ENCODE measurements at regions of chr11 and their contacts with region 1.

Region 1: DNA sequence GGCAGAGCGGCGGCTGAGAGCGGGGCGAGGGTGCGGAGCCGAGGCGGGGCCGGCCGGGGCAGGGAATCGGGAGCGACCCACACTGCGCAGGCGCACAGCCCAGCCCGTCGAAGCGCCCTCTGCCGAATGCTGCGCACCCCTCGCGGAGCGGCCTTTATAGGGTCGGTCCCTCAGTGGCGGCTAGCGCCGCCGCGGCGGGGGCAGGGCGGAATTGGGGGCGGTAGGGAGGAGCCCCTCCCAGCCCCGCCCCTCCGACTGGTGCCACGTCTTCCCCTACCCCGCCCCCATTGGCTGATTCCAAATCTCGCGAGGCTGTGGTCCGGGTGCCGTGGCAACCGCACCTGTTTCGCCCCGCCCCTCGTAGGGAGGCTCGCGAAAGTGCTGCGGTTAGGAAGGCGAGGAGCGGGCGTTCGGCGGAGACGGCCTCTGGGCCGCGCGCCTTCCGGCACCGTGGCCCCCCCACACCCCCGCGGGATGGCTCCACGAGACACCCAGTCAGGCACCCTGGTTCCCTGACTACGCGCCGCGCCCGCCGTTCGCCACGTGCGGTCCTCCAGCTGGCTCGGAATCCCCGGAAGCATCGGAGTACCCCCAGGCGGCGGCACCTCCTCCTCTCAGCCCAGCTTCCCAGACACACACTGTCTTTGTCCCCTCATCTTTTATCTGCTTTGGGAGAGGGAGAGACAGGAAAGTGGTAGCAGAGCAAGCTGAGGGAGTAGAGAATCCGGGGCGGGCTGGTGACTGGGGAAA is at the start of gene EHD1:
- DNase-seq: peak; percentile 99 to 100 (median 100)
- ATAC-seq: peak; percentile 81
- H3K4me3 ChIP-seq: peak within 1 kb of the TSS; percentile 100
- H3K4me3 Mint-ChIP-seq: peak within 1 kb of the TSS; percentile 98
- H3K27ac ChIP-seq: peak within 1 kb of the TSS; percentile 95 to 97
- H3K27ac Mint-ChIP-seq: peak within 1 kb of the TSS; percentile 92
- H3K4me1 ChIP-seq: peaks cover 72% of the 10 kb centered on the region
- H3K4me1 Mint-ChIP-seq: peaks cover 62% of the 10 kb centered on the region
- H3K27me3 ChIP-seq: no peaks in the 10 kb centered on the region
- H3K27me3 Mint-ChIP-seq: no peaks in the 10 kb centered on the region
- CTCF ChIP-seq: peak; percentile 58
- total RNA-seq, gene EHD1: 132 to 139 TPM

Region 2: DNA sequence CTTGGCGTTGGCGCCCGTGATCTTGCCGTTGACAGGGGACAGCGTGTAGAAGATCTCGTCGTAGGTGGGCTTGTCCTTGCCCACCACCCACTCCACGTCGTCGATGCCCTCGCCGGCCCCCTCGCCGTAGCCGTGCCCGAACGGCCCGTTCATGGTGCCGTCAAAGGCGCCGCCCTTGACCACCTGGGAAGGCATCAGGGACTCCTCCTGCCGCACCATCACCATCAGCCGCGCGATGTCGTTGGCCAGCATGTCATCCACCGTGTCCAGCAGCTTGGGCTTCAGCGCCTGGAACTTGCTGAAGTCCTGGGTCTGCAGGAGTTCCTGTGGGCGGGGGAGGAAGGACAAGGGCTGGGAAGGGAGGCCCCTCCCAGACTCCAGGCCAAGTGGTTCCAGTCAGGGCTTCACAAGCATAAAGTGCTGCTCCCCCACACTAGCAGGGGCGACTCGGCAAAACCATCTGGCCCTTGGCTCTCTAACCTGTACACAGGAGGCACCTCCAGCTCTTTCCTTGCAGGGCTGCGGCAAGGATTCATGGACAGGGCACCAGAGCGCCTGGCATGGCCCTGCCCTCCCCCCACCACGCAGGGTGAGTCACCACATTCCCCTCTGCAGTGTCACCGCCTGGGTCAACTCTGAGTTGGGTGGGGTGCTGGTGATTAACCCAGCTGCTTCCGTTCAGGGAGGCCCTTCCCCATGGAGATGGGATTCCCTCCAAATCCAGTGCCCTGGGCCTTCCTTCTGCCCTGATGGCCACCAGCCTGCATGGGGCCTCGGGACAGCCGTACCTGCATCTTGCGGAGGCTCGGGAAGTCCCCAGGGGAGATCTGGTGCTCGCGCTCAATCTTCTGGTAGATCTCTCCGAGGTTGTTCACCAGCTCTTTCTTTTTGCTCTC is 23.9 kb before region 1 on chr11:
- CTCF ChIA-PET with region 1: interaction called, 21 read pairs
- POLR2A ChIA-PET with region 1: interaction called, 767 read pairs
- intact Hi-C with region 1: loop called (anchors 1 kb)
- DNase-seq: peak in 5 of 14 experiments; percentile 52 to 79 (median 67)
- ATAC-seq: no peak
- H3K4me3 ChIP-seq: no peak overlapping the region
- H3K4me3 Mint-ChIP-seq: peak overlapping the region; percentile 77
- H3K27ac ChIP-seq: peak overlapping the region; percentile 59 to 79
- H3K27ac Mint-ChIP-seq: peak overlapping the region; percentile 91
- H3K4me1 ChIP-seq: peaks cover 100% of the 10 kb centered on the region
- H3K4me1 Mint-ChIP-seq: peaks cover 89% of the 10 kb centered on the region
- H3K27me3 ChIP-seq: no peaks in the 10 kb centered on the region
- H3K27me3 Mint-ChIP-seq: no peaks in the 10 kb centered on the region
- CTCF ChIP-seq: no peak

Region 3: GRCh38 chr11:64864473-64865285 is 14.0 kb before region 1 on chr11:
- CTCF ChIA-PET with region 1: interaction called, 26 read pairs
- POLR2A ChIA-PET with region 1: interaction called, 767 read pairs
- intact Hi-C with region 1: loop called (anchors 1 kb)
- DNase-seq: peak in 4 of 14 experiments; percentile 43 to 66 (median 55)
- ATAC-seq: no peak
- H3K4me3 ChIP-seq: peak overlapping the region; percentile 47
- H3K4me3 Mint-ChIP-seq: peak overlapping the region; percentile 71
- H3K27ac ChIP-seq: peak overlapping the region; percentile 82 to 89
- H3K27ac Mint-ChIP-seq: peak overlapping the region; percentile 93
- H3K4me1 ChIP-seq: peaks cover 100% of the 10 kb centered on the region
- H3K4me1 Mint-ChIP-seq: peaks cover 92% of the 10 kb centered on the region
- H3K27me3 ChIP-seq: no peaks in the 10 kb centered on the region
- H3K27me3 Mint-ChIP-seq: no peaks in the 10 kb centered on the region
- CTCF ChIP-seq: no peak

Region 4: DNA sequence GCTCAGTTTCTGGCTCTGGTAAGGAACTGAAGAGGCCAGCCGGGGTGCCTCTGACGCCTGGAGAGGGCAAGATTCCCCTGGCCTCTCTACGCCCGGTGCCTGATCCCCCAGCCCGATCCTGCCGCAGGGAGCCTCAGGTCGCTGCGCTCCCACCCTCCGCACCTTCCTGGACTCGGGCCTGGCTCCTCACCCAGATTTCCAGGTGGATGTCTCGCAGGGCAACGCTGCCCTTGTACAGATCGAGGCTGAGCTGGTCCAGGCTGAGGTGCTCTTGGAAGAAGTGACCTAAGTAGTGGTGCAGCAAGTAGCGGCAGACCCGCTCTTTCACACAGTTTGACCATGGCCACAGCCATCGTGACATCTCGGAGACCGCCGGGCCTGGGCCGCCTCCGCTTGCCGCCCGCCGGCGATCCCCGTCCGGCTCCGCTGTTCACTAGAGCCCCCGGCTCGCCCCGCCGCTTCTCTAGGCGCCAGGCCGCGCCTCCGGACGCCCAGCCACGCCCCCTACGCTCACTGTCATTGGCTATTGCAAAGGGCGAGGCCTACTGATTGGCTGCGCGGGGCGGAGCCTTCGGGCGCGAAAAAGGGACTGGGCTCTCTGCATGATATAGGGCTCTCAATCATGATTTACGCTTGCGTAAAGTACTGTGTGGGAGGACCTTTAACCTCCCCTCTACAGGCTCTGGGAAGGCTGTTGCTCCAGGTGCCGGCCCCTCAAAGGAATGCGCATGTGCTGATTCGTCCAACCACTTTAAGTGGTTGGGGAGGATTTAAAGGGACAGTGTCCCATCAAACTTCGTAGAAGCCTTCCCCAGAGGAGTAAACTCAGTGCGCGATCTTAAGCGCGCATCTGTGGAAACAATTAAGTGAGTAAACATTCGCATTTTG is 38.4 kb after region 1 on chr11 and contains the start of gene ATG2A:
- CTCF ChIA-PET with region 1: no interaction called
- POLR2A ChIA-PET with region 1: no interaction called
- intact Hi-C with region 1: loop called in 1 of 2 experiments (anchors 2 kb)
- DNase-seq: peak; percentile 97 to 100 (median 99)
- ATAC-seq: peak; percentile 96
- H3K4me3 ChIP-seq: peak within 1 kb of the TSS; percentile 89
- H3K4me3 Mint-ChIP-seq: peak within 1 kb of the TSS; percentile 93
- H3K27ac ChIP-seq: peak within 1 kb of the TSS; percentile 66 to 78
- H3K27ac Mint-ChIP-seq: peak within 1 kb of the TSS; percentile 81
- H3K4me1 ChIP-seq: peaks cover 33% of the 10 kb centered on the region
- H3K4me1 Mint-ChIP-seq: peaks cover 26% of the 10 kb centered on the region
- H3K27me3 ChIP-seq: no peaks in the 10 kb centered on the region
- H3K27me3 Mint-ChIP-seq: no peaks in the 10 kb centered on the region
- CTCF ChIP-seq: no peak
- total RNA-seq, gene ATG2A: 189 to 198 TPM

Region 5: DNA sequence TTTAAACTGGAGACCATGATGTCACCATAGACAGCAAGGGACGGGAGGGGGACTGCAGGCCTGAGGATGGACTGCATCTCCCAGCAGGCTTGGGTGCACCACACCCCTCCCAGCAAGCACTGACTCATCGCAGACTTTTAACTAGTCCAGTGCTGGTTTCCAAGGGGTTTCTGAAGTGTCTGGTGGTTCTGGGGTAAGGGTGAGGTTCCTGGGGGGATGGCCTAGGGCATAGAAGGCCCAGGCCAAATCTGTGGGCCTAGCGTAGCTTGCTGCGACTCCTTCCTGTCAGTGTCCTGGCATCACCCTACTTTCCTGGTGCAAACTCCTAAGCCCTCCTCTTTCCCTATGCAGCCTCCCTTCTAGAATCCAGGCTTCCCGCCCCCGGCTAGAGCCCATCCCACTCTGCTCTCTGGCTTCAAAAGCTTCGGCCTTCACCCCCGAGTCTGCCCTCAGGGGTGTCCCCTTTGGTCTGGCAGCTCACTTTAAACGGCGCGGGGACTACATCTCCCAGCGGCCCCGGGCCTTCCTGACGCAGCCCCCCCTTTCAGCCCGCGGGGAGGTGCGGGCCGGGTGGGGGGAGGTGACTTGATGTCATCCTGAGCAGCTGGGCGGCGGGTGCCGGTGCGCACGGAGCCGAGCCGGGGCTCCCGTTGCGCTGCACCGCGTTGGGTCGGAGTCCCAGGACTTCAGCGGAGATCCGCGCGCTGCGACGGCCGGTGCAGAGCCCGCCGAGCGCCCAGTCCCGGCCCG is 45.6 kb after region 1 on chr11 and contains the start of gene PPP2R5B:
- CTCF ChIA-PET with region 1: no interaction called
- POLR2A ChIA-PET with region 1: interaction called, 5 read pairs
- intact Hi-C with region 1: loop called in 1 of 2 experiments (anchors 1 kb)
- DNase-seq: peak; percentile 79 to 95 (median 90)
- ATAC-seq: peak; percentile 92
- H3K4me3 ChIP-seq: peak within 1 kb of the TSS; percentile 69
- H3K4me3 Mint-ChIP-seq: peak within 1 kb of the TSS; percentile 95
- H3K27ac ChIP-seq: peak within 1 kb of the TSS; percentile 73 to 89
- H3K27ac Mint-ChIP-seq: peak within 1 kb of the TSS; percentile 97
- H3K4me1 ChIP-seq: peaks cover 30% of the 10 kb centered on the region
- H3K4me1 Mint-ChIP-seq: peaks cover 13% of the 10 kb centered on the region
- H3K27me3 ChIP-seq: no peaks in the 10 kb centered on the region
- H3K27me3 Mint-ChIP-seq: no peaks in the 10 kb centered on the region
- CTCF ChIP-seq: no peak
- total RNA-seq, gene PPP2R5B: 16.8 to 18.3 TPM

Measured in CD4-positive, alpha-beta T cell (primary cell).